CD14-positive monocyte (primary cell): ENCODE measurements at regions of chr4 and their contacts with region 1.

Region 1: DNA sequence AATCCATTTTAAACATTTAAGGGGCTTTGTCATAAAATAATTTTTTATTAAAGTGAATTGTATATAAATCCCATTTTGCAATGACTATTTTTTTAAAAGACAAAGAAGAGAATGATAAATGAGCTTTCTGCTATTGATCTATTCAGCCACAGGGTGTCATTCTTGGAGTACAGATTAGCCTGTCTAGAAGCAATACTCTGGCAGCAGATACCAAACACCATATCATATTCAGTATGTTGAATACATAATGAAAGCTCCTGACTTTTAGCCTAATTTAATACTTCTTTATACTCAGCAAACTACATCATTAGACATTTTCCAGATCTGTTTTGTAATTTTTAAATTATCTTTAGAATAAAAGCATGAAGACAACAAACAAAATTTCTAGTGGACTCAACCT is 496.3 kb downstream of the PDGFC start:
- DNase-seq: peak in 2 of 3 donors; percentile 27 to 38
- H3K4me3 ChIP-seq: no peak overlapping the region
- H3K4me3 Mint-ChIP-seq: no peak overlapping the region
- H3K27ac ChIP-seq: no peak overlapping the region
- H3K27ac Mint-ChIP-seq: no peak overlapping the region
- H3K4me1 ChIP-seq: no peaks in the 10 kb centered on the region
- H3K4me1 Mint-ChIP-seq: no peaks in the 10 kb centered on the region
- H3K27me3 ChIP-seq: no peaks in the 10 kb centered on the region
- H3K27me3 Mint-ChIP-seq: peaks cover 1 to 10% (median 1%) of the 10 kb centered on the region in 3 donors
- CTCF ChIP-seq: peak; percentile 60

Region 2: GRCh38 chr4:157045507-157046127 is 570.3 kb after region 1 on chr4:
- intact Hi-C with region 1: loop called in 1 of 2 experiments (anchors 10 kb)
- DNase-seq: peak; percentile 9 to 46 (median 32)
- H3K4me3 ChIP-seq: no peak overlapping the region
- H3K4me3 Mint-ChIP-seq: no peak overlapping the region
- H3K27ac ChIP-seq: no peak overlapping the region
- H3K27ac Mint-ChIP-seq: no peak overlapping the region
- H3K4me1 ChIP-seq: peaks cover 0 to 3% of the 10 kb centered on the region in 2 donors
- H3K4me1 Mint-ChIP-seq: peaks cover 6% of the 10 kb centered on the region
- H3K27me3 ChIP-seq: no peaks in the 10 kb centered on the region
- H3K27me3 Mint-ChIP-seq: peaks cover 0 to 2% (median 0%) of the 10 kb centered on the region in 3 donors
- CTCF ChIP-seq: peak; percentile 76